Activated CD4-positive, alpha-beta memory T cell treated with anti-CD3 and anti-CD28 coated beads, Interleukin-2, amount 10 ng/mL, durations not matched to agents 7 days and 5 days (primary cell): ENCODE measurements at regions of chr10 and their contacts with region 1.

Region 1: GRCh38 chr10:73495884-73496674 is at the start of gene PPP3CB:
- DNase-seq: peak; percentile 93
- H3K4me3 Mint-ChIP-seq: peak within 1 kb of the TSS; percentile 93
- H3K27ac Mint-ChIP-seq: peak within 1 kb of the TSS; percentile 96
- H3K4me1 Mint-ChIP-seq: peaks cover 52% of the 10 kb centered on the region
- H3K27me3 Mint-ChIP-seq: no peaks in the 10 kb centered on the region
- total RNA-seq, gene PPP3CB: 53.4 to 55.4 TPM

Region 2: DNA sequence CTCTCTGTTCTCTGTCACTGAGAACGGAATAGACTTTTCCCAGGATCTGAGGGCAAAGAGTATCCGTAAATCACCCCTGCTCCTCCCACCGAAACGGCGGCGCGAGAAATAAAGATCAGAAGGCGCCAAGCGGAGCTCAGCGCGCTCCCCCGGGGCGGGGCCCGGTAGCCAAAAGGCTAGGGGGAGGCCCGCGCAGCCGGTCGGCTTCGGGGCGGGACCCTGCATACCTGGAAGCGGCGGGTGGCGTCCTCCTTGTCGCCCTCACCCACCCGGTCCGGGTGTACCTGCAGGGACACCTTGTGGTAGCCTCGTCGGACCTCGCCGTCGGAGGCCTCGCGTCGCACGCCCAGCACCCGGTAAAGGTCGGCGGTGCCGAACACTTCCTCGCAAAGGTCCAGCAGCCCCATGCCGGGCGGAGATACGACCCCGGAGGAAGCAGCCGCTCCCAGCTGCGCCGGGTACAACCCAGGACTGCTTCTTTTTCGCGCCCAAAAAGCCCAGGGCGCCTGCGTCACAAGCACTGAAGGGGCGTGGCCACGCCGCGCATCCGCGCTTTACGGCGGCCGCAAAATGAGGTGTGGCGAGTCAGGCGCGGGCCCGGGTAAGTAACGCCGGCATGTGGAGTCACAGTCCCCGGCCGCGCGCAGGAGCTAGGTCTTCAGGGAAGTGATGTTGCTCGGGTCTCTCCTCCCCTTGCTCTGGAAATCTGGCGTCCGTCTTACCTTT is 249.1 kb before region 1 on chr10 and contains the start of gene DNAJC9:
- CTCF ChIA-PET with region 1: no interaction called
- POLR2A ChIA-PET with region 1: interaction called, 42 read pairs
- DNase-seq: peak; percentile 98
- H3K4me3 Mint-ChIP-seq: peak within 1 kb of the TSS; percentile 99
- H3K27ac Mint-ChIP-seq: peak within 1 kb of the TSS; percentile 95
- H3K4me1 Mint-ChIP-seq: peaks cover 71% of the 10 kb centered on the region
- H3K27me3 Mint-ChIP-seq: no peaks in the 10 kb centered on the region
- total RNA-seq, gene DNAJC9: 46.9 to 49.6 TPM

Region 3: GRCh38 chr10:73287441-73287840 is 208.6 kb before region 1 on chr10:
- CTCF ChIA-PET with region 1: no interaction called
- POLR2A ChIA-PET with region 1: no interaction called
- DNase-seq: no peak
- H3K4me3 Mint-ChIP-seq: no peak overlapping the region
- H3K27ac Mint-ChIP-seq: no peak overlapping the region
- H3K4me1 Mint-ChIP-seq: no peaks in the 10 kb centered on the region
- H3K27me3 Mint-ChIP-seq: no peaks in the 10 kb centered on the region

Region 4: GRCh38 chr10:73413528-73414229 is 82.4 kb before region 1 on chr10 and contains the start of gene ANXA7:
- CTCF ChIA-PET with region 1: interaction called, 4 read pairs
- POLR2A ChIA-PET with region 1: interaction called, 63 read pairs
- DNase-seq: peak; percentile 95
- H3K4me3 Mint-ChIP-seq: peak within 1 kb of the TSS; percentile 84
- H3K27ac Mint-ChIP-seq: peak within 1 kb of the TSS; percentile 83
- H3K4me1 Mint-ChIP-seq: peaks cover 53% of the 10 kb centered on the region
- H3K27me3 Mint-ChIP-seq: peaks cover 3% of the 10 kb centered on the region
- total RNA-seq, gene ANXA7: 98.7 to 107 TPM

Region 5: GRCh38 chr10:73485320-73485719 is 10.8 kb before region 1 on chr10:
- CTCF ChIA-PET with region 1: interaction called, 7 read pairs
- POLR2A ChIA-PET with region 1: interaction called, 60 read pairs
- DNase-seq: no peak
- H3K4me3 Mint-ChIP-seq: no peak overlapping the region
- H3K27ac Mint-ChIP-seq: no peak overlapping the region
- H3K4me1 Mint-ChIP-seq: peaks cover 33% of the 10 kb centered on the region
- H3K27me3 Mint-ChIP-seq: no peaks in the 10 kb centered on the region

Region 6: DNA sequence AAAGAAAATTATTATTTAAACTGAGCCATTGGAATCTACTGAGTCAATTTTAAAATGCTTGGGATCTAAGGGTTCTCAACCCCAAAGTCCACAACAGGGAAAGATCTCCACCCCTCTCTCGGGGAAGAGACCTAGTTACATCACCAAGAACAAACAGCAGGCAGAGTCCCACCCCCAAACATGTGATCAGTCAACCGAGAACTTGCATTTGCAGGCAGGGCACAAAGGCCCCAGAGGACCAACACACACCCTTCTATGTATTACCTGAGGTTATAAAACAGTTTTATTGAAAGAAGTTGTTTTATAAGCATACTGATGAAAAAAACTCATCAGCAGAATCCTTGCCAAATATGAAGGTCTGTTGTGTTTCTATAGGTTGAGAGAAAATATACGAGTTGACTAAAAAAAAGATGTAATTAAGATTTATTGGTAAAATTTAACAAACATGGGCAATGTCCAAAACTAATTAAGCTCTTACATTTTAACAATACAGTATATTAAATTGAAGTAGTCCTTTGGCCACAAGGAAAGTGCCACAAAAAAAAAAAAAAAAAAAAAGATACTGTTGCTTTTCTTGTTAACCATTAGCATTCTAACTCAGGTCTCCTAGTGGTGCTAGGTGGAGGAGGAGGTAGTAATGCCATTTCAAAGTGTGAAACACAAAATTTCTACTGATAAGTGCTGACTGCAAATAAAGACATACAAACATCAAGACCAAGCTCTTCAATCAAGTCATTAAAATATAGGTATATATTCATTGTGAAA is 96.0 kb after region 1 on chr10:
- CTCF ChIA-PET with region 1: no interaction called
- POLR2A ChIA-PET with region 1: no interaction called
- DNase-seq: peak; percentile 19
- H3K4me3 Mint-ChIP-seq: no peak overlapping the region
- H3K27ac Mint-ChIP-seq: peak overlapping the region; percentile 47
- H3K4me1 Mint-ChIP-seq: peaks cover 23% of the 10 kb centered on the region
- H3K27me3 Mint-ChIP-seq: no peaks in the 10 kb centered on the region

Region 7: DNA sequence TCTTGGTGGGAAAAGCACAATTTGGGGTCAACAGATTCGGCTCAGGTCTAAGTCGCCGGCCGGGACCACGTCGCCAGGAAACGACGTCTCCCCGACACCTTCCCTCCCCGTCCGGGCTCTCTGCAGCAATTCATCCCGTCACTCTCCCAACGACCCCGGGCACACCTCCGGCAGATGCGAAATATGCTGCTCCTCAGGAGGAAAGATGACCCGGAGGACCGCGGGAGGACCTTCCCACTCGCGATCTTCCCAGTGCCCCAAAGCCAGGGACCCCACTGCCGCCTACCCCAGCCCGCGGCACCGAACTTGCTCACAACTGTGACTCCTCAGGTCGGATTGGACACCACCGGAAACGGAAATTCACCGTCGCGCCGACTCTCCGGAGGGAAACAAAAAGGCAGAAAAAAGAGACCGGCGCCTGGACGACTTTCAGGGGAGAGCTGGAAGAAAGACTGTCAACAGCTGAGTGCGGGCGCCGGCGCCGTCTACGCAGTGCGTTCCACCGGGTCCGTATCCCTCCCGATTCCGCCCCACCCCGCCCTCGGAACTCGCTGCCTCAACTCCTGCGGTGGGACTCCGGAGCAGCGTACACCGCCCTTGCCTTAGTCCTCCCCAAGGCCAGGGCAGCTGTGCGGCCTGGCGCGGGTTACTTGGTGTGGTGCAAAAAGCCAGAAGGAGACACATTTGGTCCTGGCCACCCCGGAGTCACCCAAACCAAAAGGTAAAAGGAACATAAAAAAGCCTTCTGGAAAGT is 234.3 kb after region 1 on chr10:
- CTCF ChIA-PET with region 1: no interaction called
- POLR2A ChIA-PET with region 1: interaction called, 20 read pairs
- DNase-seq: peak; percentile 94
- H3K4me3 Mint-ChIP-seq: peak overlapping the region; percentile 92
- H3K27ac Mint-ChIP-seq: peak overlapping the region; percentile 96
- H3K4me1 Mint-ChIP-seq: peaks cover 19% of the 10 kb centered on the region
- H3K27me3 Mint-ChIP-seq: no peaks in the 10 kb centered on the region

Region 8: DNA sequence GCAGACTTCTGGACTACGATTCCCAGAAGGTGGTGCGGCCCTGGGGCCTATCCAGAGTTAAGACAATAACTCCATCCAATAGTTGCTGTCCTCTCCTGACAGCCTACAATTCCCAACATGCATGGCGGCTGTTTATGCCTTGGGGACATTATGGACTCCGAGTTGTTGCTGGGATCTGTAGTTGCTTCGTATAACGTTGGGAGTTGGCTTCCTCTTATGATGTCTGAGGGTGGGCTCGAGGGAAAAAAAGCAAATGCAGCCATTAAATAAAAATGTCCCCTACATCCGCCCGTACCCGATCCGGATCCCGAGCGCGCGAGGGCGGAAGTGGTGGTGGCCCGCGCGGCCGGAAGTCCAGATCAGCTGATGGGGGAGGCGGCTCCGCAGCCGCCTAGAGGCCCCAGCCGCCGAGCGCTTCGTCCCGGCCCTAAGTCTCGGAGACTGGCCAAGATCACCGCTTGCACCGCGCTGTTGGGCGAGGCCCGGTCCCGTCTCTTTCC is 289.2 kb after region 1 on chr10 and contains the start of gene ZSWIM8:
- CTCF ChIA-PET with region 1: no interaction called
- POLR2A ChIA-PET with region 1: interaction called, 10 read pairs
- DNase-seq: peak; percentile 87
- H3K4me3 Mint-ChIP-seq: peak within 1 kb of the TSS; percentile 85
- H3K27ac Mint-ChIP-seq: peak within 1 kb of the TSS; percentile 98
- H3K4me1 Mint-ChIP-seq: peaks cover 58% of the 10 kb centered on the region
- H3K27me3 Mint-ChIP-seq: no peaks in the 10 kb centered on the region
- total RNA-seq, gene ZSWIM8: 88.0 to 92.2 TPM